Activated naive CD4-positive, alpha-beta T cell treated with anti-CD3 and anti-CD28 coated beads for 36 hours (primary cell): ENCODE measurements at regions of chr7 and their contacts with region 1.

Region 1: DNA sequence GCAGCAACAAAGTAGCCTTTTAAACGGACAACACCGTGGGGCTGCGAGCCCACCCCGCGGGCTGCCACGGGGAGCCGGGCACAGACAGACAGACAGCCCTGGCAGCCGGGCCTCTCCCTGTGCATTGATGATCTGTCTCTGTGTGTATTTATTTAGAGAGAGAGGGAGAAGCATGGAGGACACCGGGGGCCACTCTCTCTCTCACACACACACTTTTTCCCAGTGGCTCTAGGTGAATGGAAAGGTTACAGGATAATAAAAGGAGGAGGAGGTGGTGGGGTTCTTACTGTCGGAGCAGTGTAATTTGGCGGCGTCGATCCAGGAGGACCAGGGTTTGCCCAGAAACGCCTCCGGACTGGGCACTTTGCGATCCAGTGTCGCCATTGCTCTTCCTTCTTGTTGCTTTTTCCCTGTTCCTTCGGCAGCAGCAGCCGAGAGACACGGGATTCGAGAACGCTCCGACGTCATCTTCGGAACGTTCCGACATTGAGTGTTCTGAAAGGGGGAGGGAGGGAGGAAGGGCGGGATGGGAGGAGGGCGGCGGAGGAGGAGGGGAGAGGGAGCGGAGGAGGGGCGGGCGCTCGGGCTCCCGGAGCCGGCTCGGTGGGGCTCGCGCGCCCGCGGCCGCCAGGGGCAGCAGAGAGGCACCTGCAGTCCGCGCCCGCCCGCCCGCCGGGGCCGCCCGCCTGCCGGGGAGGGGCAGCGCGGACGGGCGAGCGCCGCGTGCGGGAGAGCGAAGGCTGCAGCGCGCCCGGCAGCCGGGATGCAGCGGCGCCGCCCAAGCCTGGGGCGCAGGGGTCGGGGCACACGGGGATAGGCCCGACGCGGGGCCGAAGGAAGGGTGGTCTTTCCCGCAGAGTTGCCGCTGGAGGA is at the start of gene ATXN7L1:
- DNase-seq: peak; percentile 93
- H3K4me3 Mint-ChIP-seq: peak within 1 kb of the TSS; percentile 91
- H3K27ac Mint-ChIP-seq: peak within 1 kb of the TSS; percentile 82
- H3K4me1 Mint-ChIP-seq: peaks cover 58% of the 10 kb centered on the region
- H3K27me3 Mint-ChIP-seq: no peaks in the 10 kb centered on the region
- total RNA-seq, gene ATXN7L1: 8.8 to 9.2 TPM

Region 2: GRCh38 chr7:105678811-105679495 is 197.4 kb before region 1 on chr7:
- CTCF ChIA-PET with region 1: interaction called, 4 read pairs
- intact Hi-C with region 1: loop called (anchors 1 kb)
- DNase-seq: peak; percentile 60
- H3K4me3 Mint-ChIP-seq: peak overlapping the region; percentile 82
- H3K27ac Mint-ChIP-seq: peak overlapping the region; percentile 86
- H3K4me1 Mint-ChIP-seq: peaks cover 59% of the 10 kb centered on the region
- H3K27me3 Mint-ChIP-seq: no peaks in the 10 kb centered on the region

Region 3: DNA sequence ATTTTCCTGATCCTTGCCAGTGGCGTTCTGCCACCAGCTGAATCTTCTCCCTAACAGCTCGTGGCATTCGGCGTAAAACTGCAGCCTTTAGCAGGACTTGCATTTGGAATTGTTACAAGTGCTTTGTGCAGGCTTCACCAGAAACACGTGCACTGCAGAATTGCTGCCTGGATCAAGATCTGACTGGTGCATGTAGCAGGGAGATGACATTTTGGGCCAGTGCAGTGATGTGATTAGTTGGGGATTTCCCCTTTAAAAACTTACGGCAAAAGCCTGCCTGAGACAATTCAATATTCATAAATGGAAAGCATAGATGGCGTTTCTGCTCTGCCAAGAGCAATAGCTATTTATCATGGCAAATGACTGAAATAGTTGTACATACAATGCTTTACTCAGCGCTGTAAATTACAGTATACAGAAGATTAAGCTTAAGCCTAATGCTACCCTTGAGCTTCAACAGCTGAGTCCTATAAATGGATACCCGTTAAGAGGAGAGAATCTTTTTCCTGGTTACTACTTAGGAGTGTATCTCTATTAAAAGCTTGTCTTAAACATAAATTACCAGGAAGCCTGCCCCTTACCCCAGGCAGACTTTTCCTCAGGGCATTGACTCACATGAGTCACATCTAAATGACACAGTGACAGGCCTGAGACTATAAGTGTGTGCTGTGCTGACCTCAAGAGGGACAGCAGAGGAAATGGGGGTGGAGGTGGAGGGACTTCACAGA is 106.3 kb before region 1 on chr7:
- CTCF ChIA-PET with region 1: interaction called, 7 read pairs
- intact Hi-C with region 1: loop called (anchors 1 kb)
- DNase-seq: peak; percentile 39
- H3K4me3 Mint-ChIP-seq: no peak overlapping the region
- H3K27ac Mint-ChIP-seq: no peak overlapping the region
- H3K4me1 Mint-ChIP-seq: peaks cover 26% of the 10 kb centered on the region
- H3K27me3 Mint-ChIP-seq: no peaks in the 10 kb centered on the region

Region 4: DNA sequence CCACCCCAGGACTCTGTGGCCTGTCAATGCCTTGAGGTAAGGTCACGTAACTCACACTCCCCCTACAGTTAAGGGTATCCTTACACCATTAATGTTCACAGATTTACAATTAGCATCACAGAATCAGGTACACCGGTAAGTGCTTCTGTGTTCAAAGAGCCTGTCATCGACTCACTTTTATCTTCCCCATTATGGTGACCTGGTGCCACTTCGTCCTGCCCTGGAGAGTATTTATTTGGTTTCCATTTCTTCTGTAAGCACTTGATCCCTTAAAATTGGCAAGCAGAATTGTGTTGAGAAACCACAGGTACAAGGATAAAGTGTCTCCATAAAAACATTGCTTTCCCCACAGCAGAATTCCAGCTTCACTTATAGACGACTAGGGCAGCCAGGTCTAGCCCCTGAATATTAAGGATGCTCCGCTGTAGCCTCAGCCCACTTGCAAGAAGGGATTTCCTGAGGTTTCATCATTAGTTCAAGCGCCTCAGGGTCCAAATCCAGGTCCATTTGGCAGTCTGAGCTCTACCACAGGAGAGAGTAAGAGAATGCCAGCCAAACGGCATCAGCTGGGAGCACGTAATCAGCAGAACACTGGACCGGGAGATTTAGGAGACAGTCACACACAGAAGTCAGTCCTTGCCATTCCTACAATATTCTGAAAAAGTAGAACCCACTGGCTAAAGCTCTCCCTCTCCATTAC is 10.1 kb before region 1 on chr7:
- CTCF ChIA-PET with region 1: interaction called, 4 read pairs
- intact Hi-C with region 1: loop called (anchors 1 kb)
- DNase-seq: no peak
- H3K4me3 Mint-ChIP-seq: no peak overlapping the region
- H3K27ac Mint-ChIP-seq: no peak overlapping the region
- H3K4me1 Mint-ChIP-seq: no peaks in the 10 kb centered on the region
- H3K27me3 Mint-ChIP-seq: no peaks in the 10 kb centered on the region

Region 5: GRCh38 chr7:105924945-105925344 is 48.6 kb after region 1 on chr7:
- CTCF ChIA-PET with region 1: interaction called, 4 read pairs
- intact Hi-C with region 1: loop called (anchors 1 kb)
- DNase-seq: peak; percentile 60
- H3K4me3 Mint-ChIP-seq: no peak overlapping the region
- H3K27ac Mint-ChIP-seq: peak overlapping the region; percentile 9
- H3K4me1 Mint-ChIP-seq: peaks cover 26% of the 10 kb centered on the region
- H3K27me3 Mint-ChIP-seq: peaks cover 2% of the 10 kb centered on the region

Region 6: GRCh38 chr7:106022193-106022821 is 146.0 kb after region 1 on chr7:
- CTCF ChIA-PET with region 1: no interaction called
- intact Hi-C with region 1: loop called (anchors 5 kb)
- DNase-seq: peak; percentile 82
- H3K4me3 Mint-ChIP-seq: peak overlapping the region; percentile 19
- H3K27ac Mint-ChIP-seq: peak overlapping the region; percentile 62
- H3K4me1 Mint-ChIP-seq: peaks cover 71% of the 10 kb centered on the region
- H3K27me3 Mint-ChIP-seq: no peaks in the 10 kb centered on the region

Region 7: GRCh38 chr7:106089647-106090046 is 213.3 kb after region 1 on chr7:
- CTCF ChIA-PET with region 1: no interaction called
- intact Hi-C with region 1: no loop called
- DNase-seq: no peak
- H3K4me3 Mint-ChIP-seq: no peak overlapping the region
- H3K27ac Mint-ChIP-seq: no peak overlapping the region
- H3K4me1 Mint-ChIP-seq: peaks cover 9% of the 10 kb centered on the region
- H3K27me3 Mint-ChIP-seq: no peaks in the 10 kb centered on the region